ENCODE measurements at regions of chr14 and their contacts with region 1.

Region 1: GRCh38 chr14:77457522-77458290 is at the starts of genes AHSA1 and VIPAS39:
- DNase-seq: peak; percentile 96
- ATAC-seq: peak; percentile 96
- H3K4me3 Mint-ChIP-seq: peak within 1 kb of the TSS; percentile 88
- H3K27ac Mint-ChIP-seq: peak within 1 kb of the TSS; percentile 100
- H3K4me1 Mint-ChIP-seq: peaks cover 38% of the 10 kb centered on the region
- H3K27me3 Mint-ChIP-seq: no peaks in the 10 kb centered on the region
- total RNA-seq, gene AHSA1: 318 to 348 TPM
- total RNA-seq, gene VIPAS39: 16.4 to 20.1 TPM

Region 2: GRCh38 chr14:76812211-76813044 is 645.3 kb before region 1 on chr14 and contains the start of gene ANGEL1:
- CTCF ChIA-PET with region 1: no interaction called
- POLR2A ChIA-PET with region 1: no interaction called
- intact Hi-C with region 1: loop called in 1 of 2 experiments (anchors 5 kb)
- DNase-seq: peak; percentile 98
- ATAC-seq: peak; percentile 90
- H3K4me3 Mint-ChIP-seq: peak within 1 kb of the TSS; percentile 97
- H3K27ac Mint-ChIP-seq: peak within 1 kb of the TSS; percentile 93
- H3K4me1 Mint-ChIP-seq: peaks cover 27% of the 10 kb centered on the region
- H3K27me3 Mint-ChIP-seq: no peaks in the 10 kb centered on the region
- total RNA-seq, gene ANGEL1: 15.8 to 17.2 TPM

Region 3: DNA sequence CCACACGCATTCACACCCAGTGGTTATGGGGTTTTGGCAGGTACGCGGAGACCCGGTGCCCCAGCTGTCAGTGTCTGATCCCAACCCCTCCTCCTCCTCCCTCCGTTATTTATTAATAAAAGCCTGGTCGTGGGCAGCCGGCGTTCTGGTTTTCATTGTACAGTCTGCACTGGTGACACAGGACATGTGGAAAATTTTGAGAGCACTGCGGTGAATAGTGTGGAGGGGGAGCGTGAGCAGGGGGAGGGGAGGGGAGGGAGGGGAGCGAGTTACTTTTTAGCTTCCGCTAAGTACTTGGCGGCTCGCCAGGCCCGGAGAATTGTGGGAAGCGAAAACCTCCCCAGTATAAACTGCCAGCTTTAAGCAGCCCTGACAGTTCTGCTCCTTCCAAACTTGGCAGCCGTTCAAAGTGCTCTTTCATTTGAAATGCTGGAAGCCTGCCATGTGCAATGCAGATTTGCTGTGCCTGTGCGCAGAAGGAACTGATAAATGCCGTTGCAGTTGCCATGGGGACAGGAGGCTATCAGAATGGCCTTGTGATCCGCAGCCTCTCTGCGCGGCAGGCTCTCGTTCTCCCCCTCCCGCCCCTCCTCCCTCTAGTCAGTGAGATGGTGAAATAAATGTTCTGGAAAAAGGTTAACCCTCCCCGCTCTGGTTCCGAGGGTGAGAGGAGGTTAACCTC is 417.5 kb before region 1 on chr14:
- CTCF ChIA-PET with region 1: no interaction called
- POLR2A ChIA-PET with region 1: no interaction called
- intact Hi-C with region 1: loop called in 1 of 2 experiments (anchors 5 kb)
- DNase-seq: peak; percentile 98
- ATAC-seq: peak; percentile 66
- H3K4me3 Mint-ChIP-seq: peak overlapping the region; percentile 63
- H3K27ac Mint-ChIP-seq: peak overlapping the region; percentile 93
- H3K4me1 Mint-ChIP-seq: peaks cover 89% of the 10 kb centered on the region
- H3K27me3 Mint-ChIP-seq: no peaks in the 10 kb centered on the region

Region 4: GRCh38 chr14:77320238-77320935 is 137.3 kb before region 1 on chr14 and contains the start of gene POMT2:
- CTCF ChIA-PET with region 1: interaction called, 13 read pairs
- POLR2A ChIA-PET with region 1: interaction called, 4 read pairs
- intact Hi-C with region 1: loop called (anchors 1 kb)
- DNase-seq: peak; percentile 95
- ATAC-seq: peak; percentile 53
- H3K4me3 Mint-ChIP-seq: peak within 1 kb of the TSS; percentile 92
- H3K27ac Mint-ChIP-seq: peak within 1 kb of the TSS; percentile 99
- H3K4me1 Mint-ChIP-seq: peaks cover 19% of the 10 kb centered on the region
- H3K27me3 Mint-ChIP-seq: no peaks in the 10 kb centered on the region
- total RNA-seq, gene POMT2: 11.7 to 18.2 TPM

Region 5: DNA sequence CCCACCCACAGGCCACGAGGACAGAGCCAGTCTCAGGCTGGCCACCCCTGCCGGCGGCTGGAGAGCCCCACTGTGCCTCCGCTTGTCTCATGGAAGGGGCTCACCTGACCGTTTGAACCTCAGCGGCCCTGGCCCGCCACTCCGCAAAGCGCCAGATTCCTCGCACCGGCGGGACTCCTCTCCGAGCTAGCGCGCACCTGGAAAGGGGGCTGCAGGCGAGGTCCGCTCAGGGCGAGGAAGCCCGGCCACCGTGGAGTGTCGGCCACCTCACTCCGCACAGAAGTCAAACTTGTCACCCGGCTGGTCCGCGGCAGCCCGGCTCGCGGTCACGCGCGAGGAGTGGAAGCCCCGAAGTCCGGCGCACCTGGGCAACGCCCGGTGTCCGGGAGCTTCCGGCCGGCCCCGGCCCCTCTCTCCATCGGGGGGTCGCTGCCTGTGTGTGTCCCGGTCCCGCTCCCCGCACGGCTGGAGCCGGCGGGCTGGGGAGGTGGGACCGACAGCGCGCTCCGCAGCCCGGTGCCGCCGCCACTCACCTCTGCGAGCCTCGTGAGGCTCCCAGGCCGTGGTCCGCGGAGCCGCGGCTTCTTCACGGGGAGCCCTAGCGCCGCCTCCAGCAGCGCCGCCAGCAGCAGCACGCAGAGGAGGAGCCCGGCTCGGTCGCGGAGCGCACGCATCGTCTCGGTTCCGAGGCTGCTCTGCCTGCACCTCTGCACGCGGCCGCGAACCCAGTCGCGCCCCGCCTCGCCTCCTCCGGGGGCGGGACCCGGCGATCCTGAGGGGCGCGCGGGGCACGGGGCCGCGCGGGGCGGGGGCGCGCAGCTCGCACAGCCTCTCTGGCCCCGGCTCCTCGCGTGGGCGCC is 40.6 kb after region 1 on chr14 and contains the start of gene ISM2:
- CTCF ChIA-PET with region 1: no interaction called
- POLR2A ChIA-PET with region 1: no interaction called
- intact Hi-C with region 1: loop called in 1 of 2 experiments (anchors 2 kb)
- DNase-seq: peak; percentile 69
- ATAC-seq: peak; percentile 87
- H3K4me3 Mint-ChIP-seq: peak within 1 kb of the TSS; percentile 47
- H3K27ac Mint-ChIP-seq: no peak within 1 kb of the TSS
- H3K4me1 Mint-ChIP-seq: peaks cover 6% of the 10 kb centered on the region
- H3K27me3 Mint-ChIP-seq: peaks cover 31% of the 10 kb centered on the region
- total RNA-seq, gene ISM2: 0.41 to 0.53 TPM

Region 6: DNA sequence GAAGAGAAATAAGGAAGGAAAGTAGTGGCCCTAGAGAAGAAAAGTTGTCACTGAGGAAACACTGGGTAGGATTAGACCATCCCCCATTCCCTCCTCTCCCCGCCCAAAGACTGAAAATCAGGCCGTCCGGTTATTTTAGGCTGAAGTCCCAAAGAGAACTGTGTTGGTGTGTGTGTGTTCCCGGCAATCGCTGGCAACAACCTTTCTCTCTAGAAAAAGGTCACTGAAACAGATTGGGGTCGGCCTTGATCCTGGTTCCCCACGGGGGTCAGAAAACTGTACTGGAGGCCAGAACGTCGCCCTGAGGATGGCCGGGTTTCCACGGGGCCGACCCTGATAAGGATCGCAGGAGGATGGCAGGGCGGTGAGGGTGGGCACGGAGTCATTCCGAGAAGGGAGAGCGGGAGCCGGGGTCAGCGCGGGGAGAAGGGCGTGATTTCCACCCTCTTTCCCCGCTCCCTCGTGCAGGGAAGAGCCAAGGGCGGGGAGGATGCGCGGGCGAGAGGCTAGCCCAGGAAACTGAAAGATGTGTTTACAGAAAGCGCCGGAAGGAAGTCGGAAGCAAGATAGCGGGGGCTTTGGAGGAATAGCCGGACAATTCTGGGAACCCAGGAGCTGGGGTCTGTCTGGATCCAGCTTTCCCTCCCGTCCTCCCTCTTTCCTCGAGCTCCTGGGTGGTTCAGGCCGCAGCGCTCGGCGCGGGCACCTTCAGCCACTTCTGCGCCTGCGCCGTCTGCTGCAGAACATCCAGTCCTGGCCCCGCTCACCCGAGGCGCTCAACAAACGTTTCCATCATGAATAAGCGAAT is 184.0 kb after region 1 on chr14:
- CTCF ChIA-PET with region 1: interaction called, 3 read pairs
- POLR2A ChIA-PET with region 1: no interaction called
- intact Hi-C with region 1: loop called in 1 of 2 experiments (anchors 2 kb)
- DNase-seq: peak; percentile 87
- ATAC-seq: peak; percentile 94
- H3K4me3 Mint-ChIP-seq: peak overlapping the region; percentile 72
- H3K27ac Mint-ChIP-seq: peak overlapping the region; percentile 93
- H3K4me1 Mint-ChIP-seq: peaks cover 16% of the 10 kb centered on the region
- H3K27me3 Mint-ChIP-seq: no peaks in the 10 kb centered on the region

Region 7: DNA sequence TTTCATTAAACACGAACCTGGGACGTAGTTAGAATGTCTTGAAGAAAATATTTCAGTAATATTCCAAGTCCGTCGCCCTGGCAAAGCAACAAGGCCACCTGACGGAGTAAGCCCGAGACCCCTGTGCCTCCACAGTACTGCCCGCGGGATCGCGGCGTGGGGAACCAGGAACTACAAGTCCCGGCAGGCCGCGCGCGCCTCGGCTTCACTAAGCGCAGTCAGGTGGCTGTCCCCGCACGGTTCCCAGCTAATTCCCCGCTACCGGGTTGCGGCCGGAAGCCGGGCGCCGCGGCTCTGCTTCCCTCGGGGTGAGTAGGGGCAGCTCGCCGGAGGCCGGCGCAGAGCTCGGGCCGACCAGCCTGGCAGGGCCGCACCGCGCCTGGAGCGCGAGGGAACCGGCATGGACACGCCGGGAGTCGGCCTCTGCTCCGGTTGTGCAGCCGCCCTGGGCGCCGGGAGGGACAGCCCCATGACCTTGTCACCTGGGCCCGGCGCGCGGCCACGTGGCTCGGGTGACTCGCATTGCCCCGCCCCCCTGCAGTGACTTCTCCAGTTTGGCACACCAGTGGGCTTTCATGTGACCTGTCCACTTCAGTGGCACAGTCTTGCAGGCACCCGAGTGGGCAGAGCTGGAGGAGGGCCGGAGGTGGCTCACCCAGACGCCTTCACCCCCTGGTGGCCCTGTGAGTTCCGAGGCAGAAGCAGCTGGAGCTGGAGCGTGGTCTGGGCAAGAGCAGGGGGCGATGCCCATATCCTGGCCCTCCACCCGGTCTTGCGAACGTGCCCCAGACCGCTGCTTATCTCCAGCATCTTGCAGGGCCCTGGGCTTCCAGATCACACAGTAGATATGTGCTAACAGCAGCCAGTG is 342.4 kb after region 1 on chr14 and contains the start of gene ADCK1:
- CTCF ChIA-PET with region 1: no interaction called
- POLR2A ChIA-PET with region 1: no interaction called
- intact Hi-C with region 1: loop called (anchors 1 to 2 kb)
- DNase-seq: peak; percentile 94
- ATAC-seq: peak; percentile 94
- H3K4me3 Mint-ChIP-seq: peak within 1 kb of the TSS; percentile 83
- H3K27ac Mint-ChIP-seq: peak within 1 kb of the TSS; percentile 87
- H3K4me1 Mint-ChIP-seq: peaks cover 11% of the 10 kb centered on the region
- H3K27me3 Mint-ChIP-seq: no peaks in the 10 kb centered on the region
- total RNA-seq, gene ADCK1: 4.6 to 4.9 TPM